ENCODE measurements at regions of chr17 and their contacts with region 1.

Region 1: GRCh38 chr17:57875309-57876115 is 25.7 kb upstream of the MRPS23 start:
- DNase-seq: peak; percentile 84 to 89 (median 87)
- ATAC-seq: peak; percentile 82 to 90 (median 88)
- H3K4me3 ChIP-seq: peak overlapping the region in 5 of 12 donors; percentile 6 to 39 (median 29)
- H3K27ac ChIP-seq: peak overlapping the region; percentile 56 to 93 (median 86)
- H3K4me1 ChIP-seq: peaks cover 15 to 78% (median 54%) of the 10 kb centered on the region in 12 donors
- H3K27me3 ChIP-seq: no peaks in the 10 kb centered on the region
- CTCF ChIP-seq: peak; percentile 12 to 58 (median 40)
- POLR2A ChIP-seq: no peak

Region 2: GRCh38 chr17:57468932-57469775 is 406.4 kb before region 1 on chr17:
- intact Hi-C with region 1: no loop called
- DNase-seq: no peak
- ATAC-seq: no peak
- H3K4me3 ChIP-seq: no peak overlapping the region
- H3K27ac ChIP-seq: no peak overlapping the region
- H3K4me1 ChIP-seq: peaks cover 3 to 63% (median 28%) of the 10 kb centered on the region in 12 donors
- H3K27me3 ChIP-seq: no peaks in the 10 kb centered on the region
- CTCF ChIP-seq: no peak
- POLR2A ChIP-seq: no peak

Region 3: GRCh38 chr17:57861000-57861789 is 14.3 kb before region 1 on chr17:
- intact Hi-C with region 1: loop called in 1 of 10 experiments (anchors 2 kb)
- DNase-seq: peak; percentile 65 to 79 (median 78)
- ATAC-seq: peak; percentile 10 to 64 (median 54)
- H3K4me3 ChIP-seq: peak overlapping the region; percentile 33 to 69 (median 56)
- H3K27ac ChIP-seq: peak overlapping the region; percentile 55 to 95 (median 82)
- H3K4me1 ChIP-seq: peaks cover 3 to 46% (median 36%) of the 10 kb centered on the region in 12 donors
- H3K27me3 ChIP-seq: no peaks in the 10 kb centered on the region
- CTCF ChIP-seq: no peak
- POLR2A ChIP-seq: no peak

Region 4: GRCh38 chr17:58337600-58338453 is 462.3 kb after region 1 on chr17:
- intact Hi-C with region 1: no loop called
- DNase-seq: peak; percentile 77 to 93 (median 84)
- ATAC-seq: peak; percentile 59 to 89 (median 88)
- H3K4me3 ChIP-seq: peak overlapping the region in 7 of 12 donors; percentile 5 to 79 (median 35)
- H3K27ac ChIP-seq: peak overlapping the region in 11 of 12 donors; percentile 32 to 100 (median 79)
- H3K4me1 ChIP-seq: peaks cover 0 to 89% (median 17%) of the 10 kb centered on the region in 12 donors
- H3K27me3 ChIP-seq: peaks cover 0 to 27% (median 0%) of the 10 kb centered on the region in 9 donors
- CTCF ChIP-seq: no peak
- POLR2A ChIP-seq: peak in 1 of 2 donors; percentile 25